Activated B cell treated with CpG ODN at 0.5 μM for 24 hours (primary cell): ENCODE measurements at regions of chr1 and their contacts with region 1.

Region 1: GRCh38 chr1:52141513-52142219 is at the start of gene ZFYVE9:
- DNase-seq: peak; percentile 77
- ATAC-seq: peak; percentile 84
- H3K4me3 Mint-ChIP-seq: peak within 1 kb of the TSS; percentile 81
- H3K27ac Mint-ChIP-seq: peak within 1 kb of the TSS; percentile 9
- H3K4me1 Mint-ChIP-seq: peaks cover 28% of the 10 kb centered on the region
- H3K27me3 Mint-ChIP-seq: peaks cover 18% of the 10 kb centered on the region
- CTCF ChIP-seq: no peak
- total RNA-seq, gene ZFYVE9: 3.2 and 3.3 TPM in 2 replicates

Region 2: DNA sequence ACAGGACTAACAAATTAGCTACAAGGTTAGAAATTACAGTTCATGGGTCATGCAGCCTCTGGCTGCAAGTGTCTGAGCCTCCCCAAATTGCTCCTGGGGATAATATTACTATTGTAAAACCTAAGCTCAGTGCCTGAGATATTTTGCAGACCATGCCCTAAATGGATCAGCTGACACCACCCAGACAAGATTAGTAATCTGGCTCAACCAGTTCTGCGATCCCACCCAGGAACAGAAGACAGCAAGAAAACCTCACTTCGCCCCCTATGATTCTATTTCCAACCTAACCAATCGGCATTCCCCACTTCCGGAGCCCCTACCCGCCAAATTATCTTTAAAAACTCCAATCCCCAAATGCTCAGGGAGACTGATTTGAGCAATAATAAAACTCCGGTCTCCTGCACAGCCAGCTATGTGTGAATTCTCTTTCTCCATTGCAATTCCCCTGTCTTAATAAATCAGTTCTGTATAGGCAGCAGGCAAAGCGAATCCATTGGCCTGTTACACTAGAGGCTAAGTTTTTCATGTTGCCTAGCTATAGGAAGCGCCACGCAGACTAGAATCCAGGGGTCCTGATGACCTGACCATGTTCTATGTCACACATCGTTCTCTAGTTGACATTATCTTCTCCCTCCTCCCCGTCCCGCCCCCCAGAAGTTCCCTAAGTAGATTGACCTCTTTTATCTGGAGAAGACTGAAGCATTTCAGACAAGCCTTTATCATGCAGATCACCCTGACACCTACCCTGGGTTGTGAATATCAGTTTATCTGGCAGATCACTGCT is 22.2 kb before region 1 on chr1:
- CTCF ChIA-PET with region 1: no interaction called
- POLR2A ChIA-PET with region 1: no interaction called
- intact Hi-C with region 1: no loop called
- DNase-seq: no peak
- ATAC-seq: no peak
- H3K4me3 Mint-ChIP-seq: no peak overlapping the region
- H3K27ac Mint-ChIP-seq: no peak overlapping the region
- H3K4me1 Mint-ChIP-seq: no peaks in the 10 kb centered on the region
- H3K27me3 Mint-ChIP-seq: peaks cover 8% of the 10 kb centered on the region
- CTCF ChIP-seq: no peak

Region 3: DNA sequence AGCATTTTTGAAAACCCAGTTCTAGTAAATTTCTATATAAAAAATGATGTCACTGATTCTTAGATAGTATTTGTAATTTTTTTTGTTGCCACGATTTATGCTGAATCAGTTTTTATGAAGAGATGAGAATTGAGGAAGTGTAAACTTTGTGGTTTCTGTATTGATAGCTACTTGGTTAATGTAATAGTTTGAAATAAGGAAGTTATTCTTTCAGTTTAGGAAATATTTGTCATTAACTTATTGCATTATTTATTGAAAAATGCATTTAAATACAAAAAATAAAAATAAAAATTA is 98.0 kb after region 1 on chr1:
- CTCF ChIA-PET with region 1: no interaction called
- POLR2A ChIA-PET with region 1: no interaction called
- intact Hi-C with region 1: loop called (anchors 2 kb)
- DNase-seq: no peak
- ATAC-seq: peak; percentile 68
- H3K4me3 Mint-ChIP-seq: no peak overlapping the region
- H3K27ac Mint-ChIP-seq: no peak overlapping the region
- H3K4me1 Mint-ChIP-seq: peaks cover 11% of the 10 kb centered on the region
- H3K27me3 Mint-ChIP-seq: peaks cover 42% of the 10 kb centered on the region
- CTCF ChIP-seq: no peak

Region 4: GRCh38 chr1:52296345-52296744 is 154.7 kb after region 1 on chr1:
- CTCF ChIA-PET with region 1: interaction called, 3 read pairs
- POLR2A ChIA-PET with region 1: no interaction called
- intact Hi-C with region 1: loop called (anchors 1 kb)
- DNase-seq: no peak
- ATAC-seq: no peak
- H3K4me3 Mint-ChIP-seq: no peak overlapping the region
- H3K27ac Mint-ChIP-seq: no peak overlapping the region
- H3K4me1 Mint-ChIP-seq: no peaks in the 10 kb centered on the region
- H3K27me3 Mint-ChIP-seq: peaks cover 1% of the 10 kb centered on the region
- CTCF ChIP-seq: no peak

Region 5: DNA sequence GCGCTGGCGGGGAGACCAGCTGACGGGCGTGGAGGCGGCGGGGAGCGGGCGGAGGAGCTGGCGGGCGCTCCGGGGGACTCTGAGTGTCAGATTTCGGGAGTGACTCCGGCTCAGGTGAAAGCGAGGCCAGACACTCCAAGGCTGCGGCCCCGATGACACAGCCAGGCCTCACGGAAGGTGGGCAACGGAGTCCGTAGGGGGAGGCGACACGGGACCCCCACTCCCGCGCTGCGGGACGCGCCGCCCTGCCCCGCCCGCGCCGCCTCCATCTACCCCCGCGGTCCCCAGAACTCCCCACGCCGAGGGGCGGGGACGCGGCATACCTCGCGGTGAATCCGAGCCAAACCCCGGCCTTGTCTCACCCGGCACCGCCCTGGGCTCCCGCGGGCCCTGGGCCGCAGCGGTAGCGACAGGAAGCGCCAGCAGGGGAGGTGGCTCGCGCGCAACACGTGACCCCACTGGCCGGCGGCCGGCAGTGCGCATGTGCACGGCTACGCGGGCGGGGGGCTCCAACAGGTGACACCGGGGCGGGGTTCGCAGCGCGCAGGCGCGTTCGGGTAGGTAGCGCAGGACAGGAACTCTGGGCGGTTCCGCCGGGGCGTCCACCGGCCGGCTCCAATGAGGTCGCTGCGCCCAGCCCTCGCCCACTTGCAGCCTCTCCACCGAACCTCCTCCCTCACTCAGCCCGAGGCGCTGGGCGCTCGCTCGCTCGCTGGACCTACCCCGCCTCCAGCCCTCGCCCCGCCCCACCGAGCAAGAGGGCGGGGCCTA is 224.3 kb after region 1 on chr1 and contains the start of gene CC2D1B:
- CTCF ChIA-PET with region 1: no interaction called
- POLR2A ChIA-PET with region 1: no interaction called
- intact Hi-C with region 1: loop called (anchors 5 kb)
- DNase-seq: peak; percentile 100
- ATAC-seq: peak; percentile 95
- H3K4me3 Mint-ChIP-seq: peak within 1 kb of the TSS; percentile 94
- H3K27ac Mint-ChIP-seq: peak within 1 kb of the TSS; percentile 88
- H3K4me1 Mint-ChIP-seq: peaks cover 30% of the 10 kb centered on the region
- H3K27me3 Mint-ChIP-seq: peaks cover 2% of the 10 kb centered on the region
- CTCF ChIP-seq: no peak
- total RNA-seq, gene CC2D1B: 51.3 and 66.4 TPM in 2 replicates

Region 6: GRCh38 chr1:52482326-52483004 is 340.8 kb after region 1 on chr1:
- CTCF ChIA-PET with region 1: no interaction called
- POLR2A ChIA-PET with region 1: no interaction called
- intact Hi-C with region 1: loop called (anchors 10 kb)
- DNase-seq: no peak
- ATAC-seq: no peak
- H3K4me3 Mint-ChIP-seq: no peak overlapping the region
- H3K27ac Mint-ChIP-seq: peak overlapping the region; percentile 7
- H3K4me1 Mint-ChIP-seq: no peaks in the 10 kb centered on the region
- H3K27me3 Mint-ChIP-seq: no peaks in the 10 kb centered on the region
- CTCF ChIP-seq: no peak

Region 7: GRCh38 chr1:52726265-52727113 is 584.8 kb after region 1 on chr1 and contains the start of gene ZYG11B:
- CTCF ChIA-PET with region 1: no interaction called
- POLR2A ChIA-PET with region 1: no interaction called
- intact Hi-C with region 1: loop called (anchors 1 kb)
- DNase-seq: peak; percentile 90
- ATAC-seq: peak; percentile 94
- H3K4me3 Mint-ChIP-seq: peak within 1 kb of the TSS; percentile 91
- H3K27ac Mint-ChIP-seq: peak within 1 kb of the TSS; percentile 85
- H3K4me1 Mint-ChIP-seq: peaks cover 35% of the 10 kb centered on the region
- H3K27me3 Mint-ChIP-seq: no peaks in the 10 kb centered on the region
- CTCF ChIP-seq: no peak
- total RNA-seq, gene ZYG11B: 14.9 and 17.3 TPM in 2 replicates